ENCODE measurements at regions of chr2 and their contacts with region 1.

Region 1: DNA sequence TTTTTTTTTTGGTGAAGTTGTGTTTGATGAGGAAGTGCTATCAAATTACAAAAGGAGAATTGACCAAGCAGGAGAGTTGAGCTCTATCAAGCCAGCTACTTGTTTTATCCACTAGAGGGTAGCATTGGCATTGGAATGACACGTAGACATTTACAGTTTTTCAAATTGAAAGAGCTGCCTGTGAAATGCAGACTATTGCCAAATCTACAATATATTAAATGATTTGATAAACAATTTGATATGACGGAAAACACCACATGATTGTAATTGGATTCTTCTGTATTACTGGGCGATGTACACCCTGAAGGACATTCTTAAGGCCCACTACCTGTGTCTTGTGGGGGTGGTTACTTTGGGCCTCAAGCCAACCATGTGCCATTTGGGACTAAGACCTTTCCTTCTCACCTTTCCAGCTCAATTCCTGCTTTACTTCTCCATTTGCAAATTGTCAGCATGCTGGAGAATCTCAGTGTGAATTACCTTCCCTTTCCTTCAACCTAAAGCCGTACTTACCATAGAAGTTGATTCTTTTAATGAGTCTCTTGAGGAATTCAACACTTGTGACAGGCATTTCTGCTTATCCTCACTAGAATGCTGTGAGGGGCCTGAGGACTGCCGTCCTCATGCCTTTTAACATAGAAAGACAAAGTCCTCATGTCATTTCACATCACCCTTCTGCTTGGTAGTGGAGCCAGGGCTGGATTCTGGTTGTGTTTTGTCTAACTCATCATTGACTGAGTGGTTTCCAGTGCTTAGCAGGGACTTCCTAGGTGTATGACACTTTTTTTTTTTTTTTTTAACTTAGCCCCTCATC is 134.8 kb upstream of the THUMPD2 start:
- DNase-seq: peak in 1 of 2 experiments; percentile 47
- H3K4me3 ChIP-seq: no peak overlapping the region
- H3K4me3 Mint-ChIP-seq: no peak overlapping the region
- H3K27ac Mint-ChIP-seq: no peak overlapping the region
- H3K4me1 ChIP-seq: no peaks in the 10 kb centered on the region
- H3K4me1 Mint-ChIP-seq: no peaks in the 10 kb centered on the region
- H3K27me3 ChIP-seq: no peaks in the 10 kb centered on the region; the same call in 1 of the 2 replicates
- H3K27me3 Mint-ChIP-seq: peaks cover 20% of the 10 kb centered on the region
- CTCF ChIP-seq: peak; percentile 58 to 72

Region 2: GRCh38 chr2:39778962-39779851 is 134.6 kb before region 1 on chr2 and contains the start of gene THUMPD2:
- CTCF ChIA-PET with region 1: no interaction called
- POLR2A ChIA-PET with region 1: no interaction called
- intact Hi-C with region 1: no loop called
- DNase-seq: peak; percentile 80 to 85
- H3K4me3 ChIP-seq: peak within 1 kb of the TSS; percentile 96
- H3K4me3 Mint-ChIP-seq: peak within 1 kb of the TSS; percentile 93
- H3K27ac Mint-ChIP-seq: peak within 1 kb of the TSS; percentile 90
- H3K4me1 ChIP-seq: peaks cover 10% of the 10 kb centered on the region; the same call in 1 of the 2 replicates
- H3K4me1 Mint-ChIP-seq: peaks cover 28% of the 10 kb centered on the region
- H3K27me3 ChIP-seq: no peaks in the 10 kb centered on the region
- H3K27me3 Mint-ChIP-seq: no peaks in the 10 kb centered on the region
- CTCF ChIP-seq: no peak
- total RNA-seq, gene THUMPD2: 13.8 and 17.4 TPM in 2 replicates

Region 3: DNA sequence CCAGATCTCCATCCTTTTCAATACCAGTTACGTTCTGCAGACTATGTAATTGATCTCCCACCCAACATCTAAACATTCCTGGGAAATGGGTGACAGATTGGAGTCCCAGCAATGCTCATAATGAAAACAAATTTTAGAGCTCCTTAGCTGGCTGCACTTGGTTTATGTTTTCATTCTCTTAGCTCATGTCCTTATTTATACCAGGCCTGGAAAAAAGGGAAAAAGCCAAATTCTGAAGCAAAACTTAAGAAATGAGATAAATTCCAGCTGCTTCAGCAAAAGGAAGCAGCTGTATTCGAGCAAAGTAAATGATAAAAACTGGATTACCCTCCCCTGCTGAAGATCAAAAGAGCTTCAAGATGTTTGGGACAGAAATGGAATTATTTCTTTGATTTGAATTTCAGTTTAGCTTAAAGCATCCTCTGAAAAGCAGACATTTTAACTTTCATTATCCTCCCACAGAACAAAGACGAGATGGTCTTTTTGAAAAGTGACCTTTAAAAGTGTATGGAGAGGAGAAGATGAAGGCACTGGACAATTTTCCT is 61.7 kb after region 1 on chr2:
- CTCF ChIA-PET with region 1: no interaction called
- POLR2A ChIA-PET with region 1: no interaction called
- intact Hi-C with region 1: no loop called
- DNase-seq: no peak
- H3K4me3 ChIP-seq: no peak overlapping the region
- H3K4me3 Mint-ChIP-seq: no peak overlapping the region
- H3K27ac Mint-ChIP-seq: no peak overlapping the region
- H3K4me1 ChIP-seq: no peaks in the 10 kb centered on the region
- H3K4me1 Mint-ChIP-seq: no peaks in the 10 kb centered on the region
- H3K27me3 ChIP-seq: no peaks in the 10 kb centered on the region
- H3K27me3 Mint-ChIP-seq: peaks cover 2% of the 10 kb centered on the region
- CTCF ChIP-seq: no peak

Region 4: DNA sequence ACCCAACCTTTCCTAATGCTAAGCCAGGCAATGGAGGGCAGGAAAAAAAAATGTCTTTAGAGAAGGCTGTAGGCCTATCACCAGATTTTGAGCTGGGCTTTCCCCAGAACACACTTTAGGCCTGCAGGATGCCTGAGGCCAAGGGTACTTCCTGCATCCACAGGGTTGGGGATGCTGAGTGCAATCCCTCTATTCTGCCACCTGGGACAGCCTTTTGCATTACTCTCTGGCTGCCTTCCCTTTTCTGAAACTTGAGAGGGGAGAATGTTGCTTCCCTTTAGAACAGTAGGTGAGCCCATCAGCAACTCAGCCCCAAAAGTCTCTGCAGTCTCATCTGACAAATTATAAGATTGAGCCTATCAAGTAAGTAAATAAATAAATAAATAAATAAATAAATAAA is 342.8 kb after region 1 on chr2:
- CTCF ChIA-PET with region 1: no interaction called
- POLR2A ChIA-PET with region 1: no interaction called
- intact Hi-C with region 1: loop called (anchors 5 kb)
- DNase-seq: peak in 1 of 2 experiments; percentile 28
- H3K4me3 ChIP-seq: no peak overlapping the region
- H3K4me3 Mint-ChIP-seq: no peak overlapping the region
- H3K27ac Mint-ChIP-seq: no peak overlapping the region
- H3K4me1 ChIP-seq: no peaks in the 10 kb centered on the region
- H3K4me1 Mint-ChIP-seq: no peaks in the 10 kb centered on the region
- H3K27me3 ChIP-seq: no peaks in the 10 kb centered on the region; the same call in 1 of the 2 replicates
- H3K27me3 Mint-ChIP-seq: peaks cover 12% of the 10 kb centered on the region
- CTCF ChIP-seq: peak; percentile 27 to 28

Region 5: DNA sequence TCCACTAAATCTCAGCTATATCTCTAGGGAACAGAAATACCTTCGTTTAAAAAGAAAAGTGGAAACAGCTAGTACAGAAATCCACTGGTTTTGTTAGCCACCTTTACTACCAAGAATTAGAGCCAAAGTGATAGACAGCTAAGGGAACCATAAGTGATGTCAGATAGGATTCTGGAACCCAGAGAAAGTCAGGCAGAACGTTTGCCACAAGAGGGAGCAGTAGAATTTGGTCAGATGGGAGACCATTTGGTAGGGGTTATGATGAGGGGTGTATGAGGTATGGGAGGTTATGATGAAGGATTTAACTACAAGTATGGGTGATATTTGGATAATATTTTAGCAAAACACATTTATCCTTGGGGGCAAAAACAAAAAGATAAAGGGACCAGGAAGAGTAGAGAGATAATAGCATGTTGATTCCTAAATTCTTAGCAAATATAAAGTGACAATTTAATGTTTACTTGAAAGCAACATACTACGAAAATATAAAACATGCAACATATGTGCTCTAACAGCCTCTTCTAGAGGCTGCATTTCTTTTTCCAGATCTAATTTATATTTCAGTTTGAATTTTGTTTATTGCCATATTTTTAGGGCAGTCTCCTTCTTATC is 534.7 kb after region 1 on chr2:
- CTCF ChIA-PET with region 1: no interaction called
- POLR2A ChIA-PET with region 1: no interaction called
- intact Hi-C with region 1: loop called (anchors 2 kb)
- DNase-seq: peak in 1 of 2 experiments; percentile 37
- H3K4me3 ChIP-seq: no peak overlapping the region
- H3K4me3 Mint-ChIP-seq: no peak overlapping the region
- H3K27ac Mint-ChIP-seq: no peak overlapping the region
- H3K4me1 ChIP-seq: no peaks in the 10 kb centered on the region
- H3K4me1 Mint-ChIP-seq: no peaks in the 10 kb centered on the region
- H3K27me3 ChIP-seq: no peaks in the 10 kb centered on the region
- H3K27me3 Mint-ChIP-seq: peaks cover 14% of the 10 kb centered on the region
- CTCF ChIP-seq: peak in 1 of 2 experiments; percentile 51

Region 6: DNA sequence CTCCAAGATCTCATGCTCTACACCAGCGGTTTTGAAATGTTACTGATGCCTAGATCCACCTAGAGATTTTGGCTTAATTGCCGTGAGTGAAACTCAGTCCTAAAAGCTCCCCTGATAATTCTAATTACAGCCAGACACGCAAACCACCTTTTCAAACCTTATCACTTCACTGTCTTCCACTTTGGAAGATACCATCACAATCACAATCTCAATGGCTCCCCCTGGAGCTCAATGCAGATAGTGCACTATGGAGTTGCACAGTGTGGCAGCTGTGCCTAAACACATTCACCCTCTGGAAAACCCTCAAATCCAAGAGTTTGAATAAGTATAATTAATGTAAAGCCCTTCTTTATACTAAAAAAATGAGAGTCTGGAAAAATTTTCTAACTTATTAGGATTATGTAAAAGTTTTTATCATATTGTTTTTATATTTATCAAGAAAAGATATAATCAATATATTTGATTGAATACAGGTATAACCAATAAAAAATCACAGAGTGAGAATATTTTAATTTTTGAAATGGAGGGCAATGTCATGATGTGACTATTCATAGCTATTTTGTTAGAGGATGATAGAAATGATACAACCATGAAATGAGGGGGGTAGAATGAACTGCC is 640.9 kb after region 1 on chr2:
- CTCF ChIA-PET with region 1: interaction called, 28 read pairs
- POLR2A ChIA-PET with region 1: no interaction called
- intact Hi-C with region 1: loop called (anchors 1 kb)
- DNase-seq: peak; percentile 65 to 75
- H3K4me3 ChIP-seq: no peak overlapping the region
- H3K4me3 Mint-ChIP-seq: no peak overlapping the region
- H3K27ac Mint-ChIP-seq: no peak overlapping the region
- H3K4me1 ChIP-seq: no peaks in the 10 kb centered on the region
- H3K4me1 Mint-ChIP-seq: no peaks in the 10 kb centered on the region
- H3K27me3 ChIP-seq: no peaks in the 10 kb centered on the region
- H3K27me3 Mint-ChIP-seq: peaks cover 9% of the 10 kb centered on the region
- CTCF ChIP-seq: peak; percentile 89

Region 7: DNA sequence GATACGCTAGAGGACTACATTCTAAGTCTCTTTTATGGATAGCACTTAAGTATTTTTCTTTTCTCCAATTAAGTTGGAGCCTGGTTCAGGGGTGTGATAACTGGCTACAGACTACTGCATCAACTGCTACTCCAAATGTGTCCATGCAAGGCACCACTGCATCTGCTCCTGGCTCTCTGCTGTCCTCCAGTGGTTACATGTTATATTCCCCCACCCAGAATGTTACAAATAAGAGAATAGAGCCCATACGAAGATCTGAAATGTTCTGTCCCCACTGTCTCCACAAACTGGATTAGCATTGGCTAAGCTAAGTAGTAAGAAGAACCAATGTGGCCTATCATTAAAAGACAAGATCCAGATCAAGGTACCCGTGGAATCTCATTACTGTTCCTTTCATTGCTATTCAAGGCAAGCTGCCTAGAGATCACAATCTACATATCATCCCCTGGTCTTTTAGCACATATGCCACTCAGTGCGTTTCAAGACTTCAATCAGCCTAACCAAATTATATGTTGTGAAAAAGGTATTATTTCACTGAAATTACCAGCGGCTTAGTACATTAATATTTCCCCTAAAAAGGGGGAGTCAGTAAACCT is 846.3 kb after region 1 on chr2:
- CTCF ChIA-PET with region 1: interaction called, 4 read pairs
- POLR2A ChIA-PET with region 1: no interaction called
- intact Hi-C with region 1: loop called (anchors 1 kb)
- DNase-seq: peak; percentile 49 to 56
- H3K4me3 ChIP-seq: no peak overlapping the region
- H3K4me3 Mint-ChIP-seq: no peak overlapping the region
- H3K27ac Mint-ChIP-seq: no peak overlapping the region
- H3K4me1 ChIP-seq: no peaks in the 10 kb centered on the region
- H3K4me1 Mint-ChIP-seq: no peaks in the 10 kb centered on the region
- H3K27me3 ChIP-seq: no peaks in the 10 kb centered on the region
- H3K27me3 Mint-ChIP-seq: no peaks in the 10 kb centered on the region
- CTCF ChIP-seq: peak; percentile 61 to 85

Region 8: GRCh38 chr2:41400088-41400665 is 1486.3 kb after region 1 on chr2:
- CTCF ChIA-PET with region 1: interaction called, 10 read pairs
- POLR2A ChIA-PET with region 1: no interaction called
- intact Hi-C with region 1: no loop called
- DNase-seq: peak in 1 of 2 experiments; percentile 29
- H3K4me3 ChIP-seq: no peak overlapping the region
- H3K4me3 Mint-ChIP-seq: no peak overlapping the region
- H3K27ac Mint-ChIP-seq: no peak overlapping the region
- H3K4me1 ChIP-seq: no peaks in the 10 kb centered on the region; the same call in 1 of the 2 replicates
- H3K4me1 Mint-ChIP-seq: no peaks in the 10 kb centered on the region
- H3K27me3 ChIP-seq: no peaks in the 10 kb centered on the region
- H3K27me3 Mint-ChIP-seq: peaks cover 11% of the 10 kb centered on the region
- CTCF ChIP-seq: peak; percentile 22 to 34

Measured in Caco-2 (cell line).